Ascending aorta (tissue), 2 donors: ENCODE measurements at regions of chr9 and their contacts with region 1.

Region 1: DNA sequence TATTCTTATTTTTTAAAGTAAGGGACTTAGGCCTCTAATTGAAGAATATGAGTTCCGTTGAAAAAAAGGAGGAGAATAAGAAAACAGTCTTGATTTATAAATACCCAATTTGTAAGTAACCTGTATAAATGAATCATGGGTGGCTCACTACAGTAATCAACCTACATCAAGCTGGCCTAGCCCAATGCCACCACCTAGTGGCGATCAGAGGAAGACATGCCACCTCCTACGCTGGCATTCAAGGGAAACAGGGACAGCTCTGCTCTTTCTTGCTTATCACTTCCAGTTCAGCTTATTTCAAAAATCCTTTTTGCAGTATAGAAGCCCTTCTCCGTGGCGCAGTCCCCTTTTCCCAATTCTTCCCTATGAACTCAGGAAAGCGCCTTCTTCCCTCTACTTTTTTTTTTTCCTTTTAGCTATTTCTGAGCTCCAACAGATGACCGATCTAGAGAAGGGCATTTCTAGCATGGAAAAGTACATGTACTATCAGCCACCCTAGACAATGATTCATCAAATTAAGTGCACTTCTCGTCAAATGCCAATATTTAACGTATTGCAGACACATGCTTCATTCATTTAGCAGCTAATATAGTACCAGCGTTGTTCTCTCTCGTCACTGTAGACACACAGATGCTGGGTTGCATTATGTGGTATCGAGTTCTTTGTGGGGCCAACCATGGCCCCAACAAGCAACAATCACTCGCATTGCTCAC is 28.3 kb downstream of the PTPN3 start:
- DNase-seq: peak in 1 of 2 donors; percentile 84
- H3K4me3 ChIP-seq: no peak overlapping the region
- H3K27ac ChIP-seq: peak overlapping the region; percentile 31 to 59
- H3K4me1 ChIP-seq: peaks cover 10 to 25% of the 10 kb centered on the region in 2 donors
- H3K27me3 ChIP-seq: no peaks in the 10 kb centered on the region
- CTCF ChIP-seq: peak; percentile 77 to 90 (median 80)

Region 2: DNA sequence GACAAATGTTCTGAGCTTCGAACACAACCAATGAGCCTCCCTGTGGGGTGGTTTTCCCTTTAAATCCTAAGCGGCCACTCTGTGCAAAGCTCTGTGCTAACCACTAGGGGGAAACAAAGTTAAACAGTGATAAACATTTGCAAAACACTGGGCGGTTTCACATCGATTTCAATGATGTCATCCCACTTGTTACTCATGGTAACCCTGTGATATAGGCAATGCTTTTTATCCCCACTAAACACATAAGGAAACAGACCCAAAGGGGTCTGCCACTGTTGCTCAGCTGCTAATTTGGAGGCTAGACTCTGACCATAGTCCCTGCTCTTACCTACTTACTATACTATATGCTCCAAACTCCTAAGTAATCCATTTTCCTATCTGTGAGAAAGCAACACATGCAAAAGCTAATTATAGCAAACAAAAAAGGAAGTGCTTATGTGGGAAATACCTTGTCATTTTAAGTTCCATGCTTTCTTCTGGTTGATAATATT is 29.0 kb before region 1 on chr9:
- intact Hi-C with region 1: loop called (anchors 1 kb)
- DNase-seq: peak in 1 of 2 donors; percentile 83
- H3K4me3 ChIP-seq: no peak overlapping the region
- H3K27ac ChIP-seq: no peak overlapping the region
- H3K4me1 ChIP-seq: peaks cover 0 to 6% of the 10 kb centered on the region in 2 donors
- H3K27me3 ChIP-seq: no peaks in the 10 kb centered on the region
- CTCF ChIP-seq: peak; percentile 75 to 83 (median 82)

Region 3: DNA sequence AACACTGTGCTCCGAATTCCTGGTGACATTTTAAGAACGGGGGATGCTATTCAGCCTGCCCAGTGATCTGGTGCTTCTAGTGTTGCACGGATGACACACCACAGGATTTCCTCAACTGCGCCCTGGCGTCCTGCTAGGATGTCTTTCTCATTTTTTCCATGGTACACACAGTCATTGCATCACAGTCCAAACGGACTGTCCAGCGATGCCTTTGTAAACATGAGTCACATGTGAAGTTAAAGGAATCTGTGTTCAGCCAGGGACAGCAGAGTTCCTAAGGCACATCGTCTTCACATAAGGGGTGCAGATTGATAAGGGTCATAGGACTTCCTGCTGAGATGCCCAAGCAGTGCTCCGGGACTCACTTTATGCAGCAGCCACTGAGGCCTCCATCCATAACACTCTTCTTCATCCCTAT is 37.6 kb after region 1 on chr9:
- intact Hi-C with region 1: loop called (anchors 5 kb)
- DNase-seq: peak; percentile 31 to 88
- H3K4me3 ChIP-seq: no peak overlapping the region
- H3K27ac ChIP-seq: peak overlapping the region; percentile 25 to 38
- H3K4me1 ChIP-seq: peaks cover 0 to 20% of the 10 kb centered on the region in 2 donors
- H3K27me3 ChIP-seq: no peaks in the 10 kb centered on the region
- CTCF ChIP-seq: no peak

Region 4: GRCh38 chr9:109520478-109521132 is 50.8 kb after region 1 on chr9:
- intact Hi-C with region 1: loop called (anchors 2 kb)
- DNase-seq: peak in 1 of 2 donors; percentile 86
- H3K4me3 ChIP-seq: no peak overlapping the region
- H3K27ac ChIP-seq: no peak overlapping the region
- H3K4me1 ChIP-seq: peaks cover 0 to 3% of the 10 kb centered on the region in 2 donors
- H3K27me3 ChIP-seq: no peaks in the 10 kb centered on the region
- CTCF ChIP-seq: peak; percentile 85 to 93 (median 87)

Region 5: DNA sequence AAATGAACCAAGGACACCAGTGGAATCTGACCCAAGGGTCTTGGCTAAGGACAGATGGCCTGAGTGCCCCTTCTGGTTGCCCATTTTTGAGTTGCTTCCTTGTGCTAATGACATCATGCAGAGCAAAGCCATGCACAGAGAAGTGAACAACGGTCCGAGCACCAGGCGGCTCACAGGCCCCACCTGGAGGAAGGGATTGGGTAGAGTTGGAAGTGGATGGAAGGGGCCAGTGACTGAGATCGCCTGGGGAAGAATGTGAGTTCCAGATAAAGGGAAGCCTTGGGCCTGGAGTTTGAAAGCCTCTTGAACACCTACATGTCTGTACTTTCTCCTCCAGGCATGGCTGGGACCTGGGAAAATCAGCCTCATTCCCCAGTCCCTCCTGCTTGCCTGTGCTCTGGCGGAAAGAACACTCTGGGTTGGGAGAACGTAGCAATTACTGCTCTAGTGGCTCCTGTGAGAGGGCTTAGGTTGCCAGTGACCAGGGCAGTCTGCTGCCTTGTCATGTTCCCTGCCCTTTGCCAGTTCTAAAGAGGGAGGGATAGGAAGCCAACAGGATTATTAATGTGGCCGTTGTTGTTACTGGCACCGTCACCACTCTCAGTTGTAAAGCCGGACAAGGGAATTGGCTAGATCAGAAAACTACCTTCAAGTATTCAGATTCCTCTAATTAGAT is 90.8 kb after region 1 on chr9:
- intact Hi-C with region 1: no loop called
- DNase-seq: peak; percentile 61 to 82
- H3K4me3 ChIP-seq: no peak overlapping the region
- H3K27ac ChIP-seq: peak overlapping the region; percentile 79 to 89
- H3K4me1 ChIP-seq: peaks cover 0 to 13% of the 10 kb centered on the region in 2 donors
- H3K27me3 ChIP-seq: no peaks in the 10 kb centered on the region
- CTCF ChIP-seq: no peak

Region 6: DNA sequence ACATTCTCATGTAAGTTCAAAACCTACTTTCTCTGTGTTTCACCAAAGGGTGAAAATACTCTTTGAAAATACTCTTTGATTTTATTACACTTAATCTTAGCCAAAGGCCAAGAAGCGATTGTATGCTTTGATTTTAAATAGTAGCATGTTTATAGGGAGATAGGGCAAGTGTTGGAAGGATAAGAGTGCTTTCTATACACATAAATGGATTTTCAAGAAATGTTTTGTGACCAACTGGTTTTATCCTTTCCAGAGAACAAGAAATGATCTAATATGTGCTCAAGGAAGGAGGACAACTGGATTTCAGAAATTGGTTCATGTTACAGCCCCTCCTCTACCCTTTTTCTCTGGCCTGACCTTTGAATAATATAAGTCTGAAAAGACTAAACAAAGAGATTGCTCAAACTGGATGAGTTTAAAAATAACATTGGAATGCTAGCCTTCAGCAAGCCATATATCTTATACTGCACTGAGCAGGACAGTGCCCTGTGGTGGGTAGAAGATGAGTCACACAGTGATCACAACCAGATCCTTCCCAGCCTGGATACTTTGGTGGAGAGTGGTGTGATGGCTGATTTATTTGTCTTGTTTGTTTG is 323.2 kb after region 1 on chr9:
- intact Hi-C with region 1: loop called (anchors 10 kb)
- DNase-seq: peak in 1 of 2 donors; percentile 63
- H3K4me3 ChIP-seq: no peak overlapping the region
- H3K27ac ChIP-seq: peak overlapping the region; percentile 88 to 96
- H3K4me1 ChIP-seq: peaks cover 20 to 81% of the 10 kb centered on the region in 2 donors
- H3K27me3 ChIP-seq: no peaks in the 10 kb centered on the region
- CTCF ChIP-seq: no peak